Naive thymus-derived CD4-positive, alpha-beta T cell (primary cell): ENCODE measurements at regions of chr1 and their contacts with region 1.

Region 1: DNA sequence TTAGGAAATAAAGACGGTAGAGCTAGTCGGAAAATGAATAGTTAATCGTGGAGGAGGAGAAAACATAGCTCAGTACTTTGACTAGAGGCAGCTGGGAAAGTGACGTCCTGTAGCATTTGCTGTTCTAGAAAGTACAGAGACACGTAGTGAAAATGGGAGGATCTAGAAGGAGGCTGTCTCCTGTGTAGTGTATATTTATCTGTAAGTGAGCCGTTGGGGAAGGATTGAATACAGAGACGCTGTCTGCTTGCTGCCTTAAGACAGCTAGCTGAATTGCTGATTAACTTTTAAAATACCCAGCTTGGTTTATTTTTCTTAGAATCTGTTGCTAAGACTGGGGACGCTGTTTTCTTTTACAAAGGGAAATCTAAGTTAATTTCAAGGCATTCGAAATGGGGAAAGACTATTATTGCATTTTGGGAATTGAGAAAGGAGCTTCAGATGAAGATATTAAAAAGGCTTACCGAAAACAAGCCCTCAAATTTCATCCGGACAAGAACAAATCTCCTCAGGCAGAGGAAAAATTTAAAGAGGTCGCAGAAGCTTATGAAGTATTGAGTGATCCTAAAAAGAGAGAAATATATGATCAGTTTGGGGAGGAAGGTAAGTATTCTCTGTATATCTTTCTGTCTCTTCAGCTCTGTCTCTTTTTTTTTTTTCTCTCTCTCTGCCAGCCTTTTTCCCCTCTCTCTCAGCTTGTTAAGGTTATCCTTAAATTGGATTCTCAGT is at the start of gene DNAJB4:
- DNase-seq: peak in 8 of 9 donors; percentile 30 to 92 (median 87)
- ATAC-seq: peak; percentile 99
- H3K4me3 ChIP-seq: peak within 1 kb of the TSS; percentile 57
- H3K4me3 Mint-ChIP-seq: peak within 1 kb of the TSS; percentile 87 to 99 (median 92)
- H3K27ac ChIP-seq: peak within 1 kb of the TSS; percentile 95
- H3K27ac Mint-ChIP-seq: peak within 1 kb of the TSS; percentile 92 to 100 (median 99)
- H3K4me1 ChIP-seq: peaks cover 8 to 17% of the 10 kb centered on the region in 2 donors
- H3K4me1 Mint-ChIP-seq: peaks cover 9 to 57% (median 53%) of the 10 kb centered on the region in 7 donors
- H3K27me3 ChIP-seq: no peaks in the 10 kb centered on the region
- H3K27me3 Mint-ChIP-seq: peaks cover 0 to 3% (median 0%) of the 10 kb centered on the region in 5 donors
- total RNA-seq, gene DNAJB4: 11.4 to 20.1 (median 18.2) TPM

Region 2: DNA sequence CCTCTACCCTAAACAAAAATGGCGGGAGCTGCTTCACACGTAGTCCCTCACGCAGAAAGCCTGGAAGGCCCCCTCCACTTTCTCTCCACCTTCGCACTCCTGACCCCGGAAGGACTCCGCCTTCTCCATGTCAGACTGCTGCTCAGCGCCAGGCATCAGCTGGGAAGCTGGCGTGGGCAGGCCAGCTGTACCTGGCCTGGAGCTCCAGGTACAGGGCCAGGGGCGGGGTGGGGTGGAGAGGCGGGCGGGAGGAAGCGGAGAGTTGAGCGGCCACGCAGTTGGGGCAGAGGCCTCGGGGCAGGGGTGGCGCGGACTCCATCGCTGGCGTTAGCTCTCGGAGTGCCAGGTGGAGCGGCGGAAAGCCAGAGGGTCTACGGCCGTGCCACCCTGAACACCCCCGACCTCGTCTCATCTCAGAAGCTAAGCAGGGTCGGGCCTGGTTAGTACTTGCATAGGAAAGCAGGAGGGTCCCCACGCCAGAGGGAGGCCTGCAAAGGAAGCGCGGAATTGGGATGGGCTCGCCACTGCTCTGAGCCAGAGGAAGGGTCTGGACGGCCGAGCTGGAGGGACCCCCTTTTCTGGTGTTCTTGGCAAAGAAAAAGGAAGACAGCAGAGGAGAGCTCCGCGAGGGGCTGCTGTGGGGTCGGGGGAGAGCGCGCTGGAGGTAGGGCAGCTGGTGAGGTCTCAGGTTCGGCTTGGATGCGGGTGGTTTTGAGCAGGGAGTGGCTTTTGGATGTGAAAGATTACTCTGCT is 225.2 kb before region 1 on chr1 and contains the start of gene MIGA1:
- CTCF ChIA-PET with region 1: no interaction called
- POLR2A ChIA-PET with region 1: interaction called, 6 read pairs
- intact Hi-C with region 1: loop called in 1 of 2 experiments (anchors 1 kb)
- DNase-seq: peak; percentile 61 to 92 (median 86)
- ATAC-seq: peak; percentile 99
- H3K4me3 ChIP-seq: peak within 1 kb of the TSS; percentile 68
- H3K4me3 Mint-ChIP-seq: peak within 1 kb of the TSS; percentile 90 to 98 (median 94)
- H3K27ac ChIP-seq: peak within 1 kb of the TSS; percentile 87
- H3K27ac Mint-ChIP-seq: peak within 1 kb of the TSS; percentile 88 to 96 (median 93)
- H3K4me1 ChIP-seq: peaks cover 11 to 15% of the 10 kb centered on the region in 2 donors
- H3K4me1 Mint-ChIP-seq: peaks cover 21 to 54% (median 49%) of the 10 kb centered on the region in 7 donors
- H3K27me3 ChIP-seq: no peaks in the 10 kb centered on the region
- H3K27me3 Mint-ChIP-seq: peaks cover 0 to 3% (median 0%) of the 10 kb centered on the region in 5 donors
- total RNA-seq, gene MIGA1: 12.1 to 23.5 (median 15.9) TPM

Region 3: DNA sequence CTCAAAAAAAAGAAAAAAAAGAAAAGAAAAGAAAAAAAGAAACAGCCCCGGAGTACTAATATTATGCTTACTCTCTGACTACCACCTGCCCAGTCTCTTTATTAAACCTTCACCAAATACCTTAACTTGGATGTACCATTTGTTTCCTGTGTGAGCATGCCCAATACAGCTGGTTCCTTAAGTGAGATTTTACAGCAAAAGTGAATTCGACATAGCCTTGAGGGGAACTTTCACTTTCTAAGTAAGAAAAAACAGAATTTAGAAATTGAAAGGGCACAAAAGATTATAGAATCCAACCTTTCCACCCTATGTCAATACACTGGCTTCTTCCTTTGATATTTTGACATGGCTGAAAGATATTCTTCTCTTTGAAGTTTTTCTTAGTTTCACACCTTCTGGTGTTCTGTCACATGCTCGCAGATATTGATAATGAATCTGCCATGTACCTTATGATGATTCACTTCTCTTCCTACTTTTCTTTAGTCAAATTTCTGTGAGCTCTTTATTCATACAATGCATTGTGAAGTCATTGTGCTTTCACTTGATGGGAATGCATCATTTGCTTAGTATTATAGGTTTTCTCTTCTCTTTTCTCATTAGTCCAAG is 35.7 kb after region 1 on chr1:
- CTCF ChIA-PET with region 1: no interaction called
- POLR2A ChIA-PET with region 1: interaction called, 6 read pairs
- intact Hi-C with region 1: loop called in 1 of 2 experiments (anchors 2 kb)
- DNase-seq: no peak
- ATAC-seq: no peak
- H3K4me3 ChIP-seq: no peak overlapping the region
- H3K4me3 Mint-ChIP-seq: peak overlapping the region in 7 of 10 donors; percentile 12 to 60 (median 27)
- H3K27ac ChIP-seq: no peak overlapping the region
- H3K27ac Mint-ChIP-seq: peak overlapping the region in 2 of 9 donors; percentile 1 to 8
- H3K4me1 ChIP-seq: no peaks in the 10 kb centered on the region
- H3K4me1 Mint-ChIP-seq: peaks cover 13 to 21% (median 18%) of the 10 kb centered on the region in 7 donors
- H3K27me3 ChIP-seq: peaks cover 0 to 1% of the 10 kb centered on the region in 2 donors
- H3K27me3 Mint-ChIP-seq: peaks cover 13 to 32% (median 14%) of the 10 kb centered on the region in 5 donors

Region 4: GRCh38 chr1:78045926-78046778 is 41.3 kb after region 1 on chr1 and contains the start of gene GIPC2:
- CTCF ChIA-PET with region 1: no interaction called
- POLR2A ChIA-PET with region 1: interaction called, 6 read pairs
- intact Hi-C with region 1: loop called (anchors 1 to 2 kb)
- DNase-seq: peak in 8 of 9 donors; percentile 1 to 43 (median 18)
- ATAC-seq: peak; percentile 61
- H3K4me3 ChIP-seq: peak within 1 kb of the TSS; percentile 59
- H3K4me3 Mint-ChIP-seq: peak within 1 kb of the TSS; percentile 78 to 87 (median 83)
- H3K27ac ChIP-seq: no peak within 1 kb of the TSS
- H3K27ac Mint-ChIP-seq: peak within 1 kb of the TSS in 2 of 9 donors; percentile 45 to 51
- H3K4me1 ChIP-seq: no peaks in the 10 kb centered on the region
- H3K4me1 Mint-ChIP-seq: peaks cover 6 to 26% (median 19%) of the 10 kb centered on the region in 7 donors
- H3K27me3 ChIP-seq: peaks cover 0 to 19% of the 10 kb centered on the region in 2 donors
- H3K27me3 Mint-ChIP-seq: peaks cover 45 to 57% (median 50%) of the 10 kb centered on the region in 5 donors
- total RNA-seq, gene GIPC2: 0.57 to 0.60 TPM in 2 of 5 experiments, not detected in the others